ENCODE measurements at regions of chr11 and their contacts with region 1.

Region 1: GRCh38 chr11:117098269-117099232 is at the start of gene SIK3:
- DNase-seq: peak; percentile 90 to 94 (median 91)
- ATAC-seq: peak; percentile 89
- H3K4me3 ChIP-seq: peak within 1 kb of the TSS; percentile 68
- H3K4me3 Mint-ChIP-seq: peak within 1 kb of the TSS; percentile 91 to 97 (median 95)
- H3K27ac ChIP-seq: peak within 1 kb of the TSS; percentile 99
- H3K27ac Mint-ChIP-seq: peak within 1 kb of the TSS; percentile 95 to 100 (median 98)
- H3K4me1 ChIP-seq: peaks cover 27 to 29% of the 10 kb centered on the region in 2 donors
- H3K4me1 Mint-ChIP-seq: peaks cover 30 to 59% (median 50%) of the 10 kb centered on the region in 7 donors
- H3K27me3 ChIP-seq: no peaks in the 10 kb centered on the region
- H3K27me3 Mint-ChIP-seq: peaks cover 0 to 3% (median 0%) of the 10 kb centered on the region in 5 donors
- total RNA-seq, gene SIK3: 34.4 to 85.2 (median 67.0) TPM

Region 2: GRCh38 chr11:116835791-116836631 is 262.5 kb before region 1 on chr11:
- CTCF ChIA-PET with region 1: interaction called, 17 read pairs
- POLR2A ChIA-PET with region 1: interaction called, 3 read pairs
- intact Hi-C with region 1: loop called in 1 of 2 experiments (anchors 5 kb)
- DNase-seq: peak; percentile 66 to 85 (median 80)
- ATAC-seq: peak; percentile 97
- H3K4me3 ChIP-seq: peak overlapping the region; percentile 71
- H3K4me3 Mint-ChIP-seq: peak overlapping the region; percentile 68 to 84 (median 80)
- H3K27ac ChIP-seq: peak overlapping the region; percentile 41
- H3K27ac Mint-ChIP-seq: peak overlapping the region in 6 of 9 donors; percentile 31 to 75 (median 50)
- H3K4me1 ChIP-seq: peaks cover 4 to 9% of the 10 kb centered on the region in 2 donors
- H3K4me1 Mint-ChIP-seq: peaks cover 4 to 17% (median 14%) of the 10 kb centered on the region in 7 donors
- H3K27me3 ChIP-seq: no peaks in the 10 kb centered on the region
- H3K27me3 Mint-ChIP-seq: peaks cover 0 to 4% (median 0%) of the 10 kb centered on the region in 5 donors

Region 3: GRCh38 chr11:116993599-116993998 is 105.0 kb before region 1 on chr11:
- CTCF ChIA-PET with region 1: no interaction called
- POLR2A ChIA-PET with region 1: no interaction called
- intact Hi-C with region 1: loop called in 1 of 2 experiments (anchors 1 kb)
- DNase-seq: peak in 7 of 9 donors; percentile 46 to 76 (median 70)
- ATAC-seq: peak; percentile 84
- H3K4me3 ChIP-seq: no peak overlapping the region
- H3K4me3 Mint-ChIP-seq: peak overlapping the region; percentile 23 to 81 (median 64)
- H3K27ac ChIP-seq: peak overlapping the region; percentile 61
- H3K27ac Mint-ChIP-seq: peak overlapping the region; percentile 61 to 98 (median 92)
- H3K4me1 ChIP-seq: peaks cover 5 to 14% of the 10 kb centered on the region in 2 donors
- H3K4me1 Mint-ChIP-seq: peaks cover 33 to 79% (median 64%) of the 10 kb centered on the region in 7 donors
- H3K27me3 ChIP-seq: no peaks in the 10 kb centered on the region
- H3K27me3 Mint-ChIP-seq: no peaks in the 10 kb centered on the region

Region 4: DNA sequence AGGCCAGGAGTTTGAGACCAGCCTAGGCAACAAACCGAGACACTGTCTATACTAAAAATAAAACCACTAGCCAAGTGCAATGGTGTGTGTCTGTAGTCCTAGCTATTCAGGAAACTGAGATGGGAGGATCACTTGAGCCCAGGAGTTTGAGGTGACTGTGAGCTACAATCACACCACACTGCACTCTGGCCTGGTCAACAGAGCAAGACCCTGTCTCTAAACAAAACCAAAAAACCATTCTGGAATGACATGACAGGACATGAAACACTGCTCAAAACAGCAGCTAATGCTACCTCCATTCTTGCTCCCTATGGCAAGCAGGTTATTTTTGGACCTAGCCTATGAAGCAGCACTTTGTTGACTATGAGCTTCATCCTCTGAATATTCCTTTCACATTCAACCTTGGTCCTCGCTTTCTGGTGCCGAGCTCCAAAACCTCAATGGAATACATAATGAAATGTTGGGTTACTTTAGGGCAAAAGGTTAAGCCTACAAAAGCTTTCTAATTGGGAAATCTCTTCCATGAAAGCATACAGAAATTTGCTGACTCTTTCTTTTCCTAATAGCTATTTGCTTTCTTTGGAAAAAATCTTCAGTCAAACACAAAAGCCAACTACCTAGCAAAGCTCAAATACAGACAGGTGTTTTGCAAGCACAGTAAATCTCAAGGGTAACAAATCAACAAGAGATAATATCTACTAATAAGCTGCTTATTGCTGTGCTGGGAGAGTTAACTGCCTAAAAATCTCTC is 21.4 kb before region 1 on chr11:
- CTCF ChIA-PET with region 1: no interaction called
- POLR2A ChIA-PET with region 1: interaction called, 3 read pairs
- intact Hi-C with region 1: loop called (anchors 2 kb)
- DNase-seq: no peak
- ATAC-seq: no peak
- H3K4me3 ChIP-seq: no peak overlapping the region
- H3K4me3 Mint-ChIP-seq: no peak overlapping the region
- H3K27ac ChIP-seq: no peak overlapping the region
- H3K27ac Mint-ChIP-seq: no peak overlapping the region
- H3K4me1 ChIP-seq: peaks cover 11 to 41% of the 10 kb centered on the region in 2 donors
- H3K4me1 Mint-ChIP-seq: peaks cover 32 to 71% (median 54%) of the 10 kb centered on the region in 7 donors
- H3K27me3 ChIP-seq: no peaks in the 10 kb centered on the region
- H3K27me3 Mint-ChIP-seq: no peaks in the 10 kb centered on the region

Region 5: DNA sequence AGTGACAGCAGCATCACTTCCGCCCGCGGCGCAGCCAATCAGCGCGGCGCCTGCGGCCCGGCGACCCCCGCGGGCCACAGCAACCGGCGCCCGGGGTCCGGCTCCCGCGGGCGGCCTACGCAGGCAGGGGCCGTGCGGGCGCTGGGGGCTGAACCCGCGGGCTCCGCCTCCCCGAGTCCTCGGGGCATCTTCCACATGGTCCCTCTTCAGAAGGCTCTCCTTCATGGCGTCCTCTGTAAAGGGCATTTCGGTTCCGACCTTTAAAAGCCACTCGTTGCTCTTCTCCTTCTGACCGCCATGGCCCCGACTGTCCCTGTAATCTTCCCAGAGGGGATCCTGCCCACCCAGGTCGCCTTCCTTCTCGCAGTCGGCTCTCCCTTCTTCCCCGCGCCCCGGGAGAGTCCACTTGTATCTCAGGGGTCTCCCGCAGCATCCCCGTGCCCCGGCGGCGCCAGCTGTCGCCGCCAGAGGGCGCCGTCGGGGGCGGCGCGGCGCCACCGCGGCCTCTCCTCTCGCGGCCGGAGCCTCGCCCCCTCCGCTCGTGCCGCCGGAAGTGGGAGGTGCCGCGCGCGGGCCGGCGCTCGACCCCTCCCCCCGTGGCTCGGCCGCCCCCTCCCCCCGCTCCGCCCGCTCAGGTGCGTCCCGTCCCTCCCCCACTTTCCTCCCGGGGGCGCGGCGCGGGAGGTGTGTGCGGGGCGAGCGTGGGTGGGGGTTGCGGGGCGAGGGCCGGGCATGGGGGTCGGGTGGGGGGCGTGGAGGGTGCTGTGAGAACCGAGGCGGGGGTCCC is 133.7 kb after region 1 on chr11 and contains the start of gene RNF214:
- CTCF ChIA-PET with region 1: no interaction called
- POLR2A ChIA-PET with region 1: interaction called, 5 read pairs
- intact Hi-C with region 1: loop called in 1 of 2 experiments (anchors 1 kb)
- DNase-seq: peak; percentile 61 to 84 (median 73)
- ATAC-seq: peak; percentile 92
- H3K4me3 ChIP-seq: peak within 1 kb of the TSS; percentile 96
- H3K4me3 Mint-ChIP-seq: peak within 1 kb of the TSS; percentile 91 to 100 (median 98)
- H3K27ac ChIP-seq: peak within 1 kb of the TSS; percentile 97
- H3K27ac Mint-ChIP-seq: peak within 1 kb of the TSS; percentile 94 to 100 (median 99)
- H3K4me1 ChIP-seq: peaks cover 32 to 35% of the 10 kb centered on the region in 2 donors
- H3K4me1 Mint-ChIP-seq: peaks cover 40 to 55% (median 50%) of the 10 kb centered on the region in 7 donors
- H3K27me3 ChIP-seq: no peaks in the 10 kb centered on the region
- H3K27me3 Mint-ChIP-seq: no peaks in the 10 kb centered on the region
- total RNA-seq, gene RNF214: 16.6 to 36.0 (median 24.0) TPM

Region 6: GRCh38 chr11:117273550-117274289 is 175.2 kb after region 1 on chr11:
- CTCF ChIA-PET with region 1: no interaction called
- POLR2A ChIA-PET with region 1: no interaction called
- intact Hi-C with region 1: no loop called
- DNase-seq: no peak
- ATAC-seq: no peak
- H3K4me3 ChIP-seq: no peak overlapping the region
- H3K4me3 Mint-ChIP-seq: no peak overlapping the region
- H3K27ac ChIP-seq: no peak overlapping the region
- H3K27ac Mint-ChIP-seq: no peak overlapping the region
- H3K4me1 ChIP-seq: peaks cover 0 to 20% of the 10 kb centered on the region in 2 donors
- H3K4me1 Mint-ChIP-seq: peaks cover 0 to 7% (median 0%) of the 10 kb centered on the region in 7 donors
- H3K27me3 ChIP-seq: no peaks in the 10 kb centered on the region
- H3K27me3 Mint-ChIP-seq: no peaks in the 10 kb centered on the region